Activated naive CD4-positive, alpha-beta T cell treated with anti-CD3 and anti-CD28 coated beads, Interleukin-2, amount 10 ng/mL, durations not matched to agents 7 days and 5 days (primary cell): ENCODE measurements at regions of chr1 and their contacts with region 1.

Region 1: DNA sequence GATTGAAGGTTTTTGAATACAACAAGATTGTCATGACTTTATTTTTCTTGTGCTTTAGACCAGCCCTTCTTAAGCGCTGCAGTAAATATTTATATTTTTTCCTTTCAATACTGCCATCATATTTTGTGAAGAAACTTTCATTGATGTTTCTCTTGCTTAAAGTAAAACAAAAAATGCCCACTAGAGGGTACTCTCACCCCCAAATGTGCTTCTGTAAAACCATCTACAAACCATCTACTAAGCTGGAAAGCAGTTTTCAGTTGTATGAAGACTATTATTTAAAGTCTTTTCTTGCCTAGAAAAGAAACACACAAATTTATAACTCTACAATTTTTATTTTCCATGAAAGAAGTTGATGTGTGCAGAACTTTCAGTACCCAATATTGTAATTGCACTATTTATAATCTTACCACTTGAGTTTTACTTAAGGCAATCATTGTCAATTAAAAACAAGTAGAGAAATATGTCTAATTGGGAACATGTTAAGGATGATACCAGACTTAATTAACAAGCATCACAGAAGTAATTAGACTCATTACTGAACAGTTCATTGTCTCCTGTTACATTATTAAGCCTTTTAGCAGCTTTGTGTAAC is 10.7 kb downstream of the LEPR start:
- DNase-seq: no peak
- H3K4me3 Mint-ChIP-seq: no peak overlapping the region
- H3K27ac Mint-ChIP-seq: no peak overlapping the region
- H3K4me1 Mint-ChIP-seq: peaks cover 17% of the 10 kb centered on the region
- H3K27me3 Mint-ChIP-seq: no peaks in the 10 kb centered on the region

Region 2: GRCh38 chr1:65235867-65236805 is 195.1 kb before region 1 on chr1:
- CTCF ChIA-PET with region 1: interaction called, 17 read pairs
- DNase-seq: no peak
- H3K4me3 Mint-ChIP-seq: no peak overlapping the region
- H3K27ac Mint-ChIP-seq: no peak overlapping the region
- H3K4me1 Mint-ChIP-seq: peaks cover 5% of the 10 kb centered on the region
- H3K27me3 Mint-ChIP-seq: peaks cover 19% of the 10 kb centered on the region

Region 3: DNA sequence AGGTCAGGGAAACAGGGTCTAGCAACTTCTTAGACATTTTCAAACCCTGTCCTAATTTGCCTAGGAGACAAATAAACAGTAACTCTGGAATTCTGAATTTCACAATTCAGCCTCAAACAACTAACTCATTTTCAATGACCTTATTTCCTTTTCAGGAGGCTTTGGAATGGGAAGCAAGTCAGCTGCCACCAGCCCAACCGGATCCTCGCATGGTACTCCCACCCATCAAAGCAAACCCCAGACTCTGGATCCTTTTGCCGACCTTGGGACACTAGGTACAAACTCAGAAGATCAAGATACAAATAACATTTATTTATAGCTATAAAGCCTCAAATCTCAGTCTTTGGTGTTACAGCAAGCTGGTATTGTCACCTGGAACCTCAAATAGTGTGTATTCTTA is 29.6 kb before region 1 on chr1:
- CTCF ChIA-PET with region 1: no interaction called
- DNase-seq: no peak
- H3K4me3 Mint-ChIP-seq: no peak overlapping the region
- H3K27ac Mint-ChIP-seq: no peak overlapping the region
- H3K4me1 Mint-ChIP-seq: peaks cover 20% of the 10 kb centered on the region
- H3K27me3 Mint-ChIP-seq: no peaks in the 10 kb centered on the region

Region 4: GRCh38 chr1:65442442-65442841 is 11.2 kb after region 1 on chr1:
- CTCF ChIA-PET with region 1: no interaction called
- DNase-seq: no peak
- H3K4me3 Mint-ChIP-seq: no peak overlapping the region
- H3K27ac Mint-ChIP-seq: no peak overlapping the region
- H3K4me1 Mint-ChIP-seq: no peaks in the 10 kb centered on the region
- H3K27me3 Mint-ChIP-seq: no peaks in the 10 kb centered on the region

Region 5: GRCh38 chr1:65459397-65459768 is 28.2 kb after region 1 on chr1:
- CTCF ChIA-PET with region 1: interaction called, 15 read pairs
- DNase-seq: no peak
- H3K4me3 Mint-ChIP-seq: no peak overlapping the region
- H3K27ac Mint-ChIP-seq: no peak overlapping the region
- H3K4me1 Mint-ChIP-seq: peaks cover 19% of the 10 kb centered on the region
- H3K27me3 Mint-ChIP-seq: no peaks in the 10 kb centered on the region

Region 6: DNA sequence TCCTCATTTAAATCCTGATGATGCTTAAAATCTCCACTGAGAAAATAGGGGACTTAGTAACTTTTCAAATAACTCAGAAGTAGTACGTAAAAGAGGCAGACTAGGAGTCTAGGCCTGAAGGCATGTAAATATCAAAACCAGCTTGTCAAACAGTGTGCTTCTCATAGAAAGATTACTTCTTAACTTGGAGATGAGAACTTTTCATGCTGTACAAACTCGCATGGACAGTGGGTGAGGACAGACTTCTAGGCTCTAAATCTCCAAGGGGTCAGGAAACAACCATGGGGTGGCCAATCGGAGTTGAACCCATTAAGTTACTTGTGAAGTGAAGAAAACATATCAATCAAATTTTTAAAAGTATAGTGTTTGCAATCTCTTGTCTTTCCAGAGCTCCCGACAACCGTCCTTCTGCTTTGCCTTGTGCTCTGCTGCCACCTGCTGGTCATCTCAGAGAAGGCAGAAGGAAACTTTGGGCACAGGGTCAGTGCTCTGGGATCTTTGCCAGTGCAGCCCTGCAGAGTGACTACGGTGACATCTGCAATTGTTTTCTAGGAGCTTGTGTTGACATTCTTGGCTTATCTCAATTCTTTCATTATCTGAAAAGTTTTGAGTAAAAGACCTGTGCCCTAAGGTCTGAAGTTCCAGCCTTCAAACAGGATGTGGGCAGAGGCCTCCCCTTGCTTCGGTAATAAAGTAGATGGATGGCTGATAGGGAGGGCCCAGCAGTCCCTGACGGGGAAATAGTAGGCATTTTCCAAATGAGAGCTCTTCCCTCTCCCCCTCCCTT is 256.4 kb after region 1 on chr1:
- CTCF ChIA-PET with region 1: interaction called, 14 read pairs
- DNase-seq: peak; percentile 81
- H3K4me3 Mint-ChIP-seq: no peak overlapping the region
- H3K27ac Mint-ChIP-seq: no peak overlapping the region
- H3K4me1 Mint-ChIP-seq: peaks cover 5% of the 10 kb centered on the region
- H3K27me3 Mint-ChIP-seq: peaks cover 14% of the 10 kb centered on the region